Endothelial cell of umbilical vein (primary cell): ENCODE measurements at regions of chr21 and their contacts with region 1.

Region 1: DNA sequence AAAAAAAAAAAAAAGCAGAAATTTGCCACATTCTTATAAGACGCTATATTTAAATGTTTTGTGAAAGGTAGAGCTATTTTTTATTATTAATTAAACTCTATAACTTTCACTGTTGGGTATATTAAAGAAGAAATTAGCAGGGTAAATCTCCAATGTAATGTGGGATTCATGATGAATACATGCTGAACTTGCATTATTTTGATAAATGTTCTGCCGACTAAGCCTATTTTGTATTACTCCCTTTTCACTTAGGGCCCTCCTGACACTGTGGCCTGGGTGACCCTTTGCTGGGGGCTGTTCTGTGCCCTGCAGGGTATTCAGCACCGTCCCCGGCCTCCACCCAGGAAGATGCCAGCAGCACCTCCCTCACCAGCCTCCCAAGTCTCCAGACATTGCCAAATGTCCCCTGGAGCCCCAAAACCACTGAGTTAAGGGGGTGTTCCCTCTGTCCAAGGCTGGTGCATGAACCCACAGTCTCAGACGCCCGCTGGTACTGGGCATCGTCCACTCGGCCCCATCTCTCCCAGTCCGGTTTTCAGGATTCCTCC is 22.5 kb downstream of the RSPH1 start:
- DNase-seq: no peak
- H3K4me3 ChIP-seq: no peak overlapping the region
- H3K27ac ChIP-seq: no peak overlapping the region
- H3K4me1 ChIP-seq: peaks cover 12% of the 10 kb centered on the region
- H3K27me3 ChIP-seq: peaks cover 2 to 7% of the 10 kb centered on the region in 2 experiments
- CTCF ChIP-seq: no peak
- POLR2A ChIP-seq: no peak

Region 2: DNA sequence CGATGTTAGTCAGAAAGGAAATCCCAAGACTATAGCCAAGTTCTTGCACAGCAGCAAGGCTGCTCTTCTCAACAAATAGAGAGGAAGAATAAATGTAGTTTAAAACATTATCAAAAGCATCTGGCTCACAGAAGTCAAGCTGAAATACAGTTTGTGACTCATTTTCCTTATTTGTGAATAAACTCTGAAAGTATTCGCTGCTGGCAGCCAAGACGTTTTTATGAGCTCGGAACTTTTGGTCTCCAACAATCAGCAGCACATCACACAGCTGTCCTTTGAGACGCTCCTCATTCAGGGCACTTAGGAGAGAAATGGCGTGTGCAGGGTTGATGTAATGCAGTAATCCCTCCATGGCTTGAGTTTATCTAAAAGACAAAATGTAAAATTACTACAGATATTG is 479.8 kb before region 1 on chr21:
- CTCF ChIA-PET with region 1: no interaction called
- POLR2A ChIA-PET with region 1: no interaction called
- dilution Hi-C with region 1: no loop called
- intact Hi-C with region 1: no loop called
- DNase-seq: peak; percentile 21
- H3K4me3 ChIP-seq: no peak overlapping the region
- H3K27ac ChIP-seq: no peak overlapping the region
- H3K4me1 ChIP-seq: no peaks in the 10 kb centered on the region
- H3K27me3 ChIP-seq: no peaks in the 10 kb centered on the region
- CTCF ChIP-seq: no peak
- POLR2A ChIP-seq: no peak

Region 3: GRCh38 chr21:42289926-42290325 is 183.6 kb before region 1 on chr21:
- CTCF ChIA-PET with region 1: no interaction called
- POLR2A ChIA-PET with region 1: no interaction called
- dilution Hi-C with region 1: no loop called
- intact Hi-C with region 1: no loop called
- DNase-seq: no peak
- H3K4me3 ChIP-seq: no peak overlapping the region
- H3K27ac ChIP-seq: no peak overlapping the region
- H3K4me1 ChIP-seq: no peaks in the 10 kb centered on the region
- H3K27me3 ChIP-seq: no peaks in the 10 kb centered on the region
- CTCF ChIP-seq: no peak
- POLR2A ChIP-seq: no peak

Region 4: GRCh38 chr21:42518191-42518590 is 44.6 kb after region 1 on chr21:
- CTCF ChIA-PET with region 1: no interaction called
- POLR2A ChIA-PET with region 1: no interaction called
- dilution Hi-C with region 1: no loop called
- intact Hi-C with region 1: loop called (anchors 1 kb)
- DNase-seq: no peak
- H3K4me3 ChIP-seq: no peak overlapping the region
- H3K27ac ChIP-seq: no peak overlapping the region
- H3K4me1 ChIP-seq: peaks cover 4% of the 10 kb centered on the region
- H3K27me3 ChIP-seq: no peaks in the 10 kb centered on the region
- CTCF ChIP-seq: no peak
- POLR2A ChIP-seq: no peak

Region 5: GRCh38 chr21:42674351-42674940 is 200.9 kb after region 1 on chr21:
- CTCF ChIA-PET with region 1: no interaction called
- POLR2A ChIA-PET with region 1: no interaction called
- dilution Hi-C with region 1: no loop called
- intact Hi-C with region 1: no loop called
- DNase-seq: no peak
- H3K4me3 ChIP-seq: no peak overlapping the region
- H3K27ac ChIP-seq: no peak overlapping the region
- H3K4me1 ChIP-seq: peaks cover 10% of the 10 kb centered on the region
- H3K27me3 ChIP-seq: peaks cover 0 to 9% of the 10 kb centered on the region in 2 experiments
- CTCF ChIP-seq: no peak
- POLR2A ChIP-seq: no peak